Activated CD8-positive, alpha-beta T cell treated with anti-CD3 and anti-CD28 coated beads for 36 hours (primary cell): ENCODE measurements at regions of chr6 and their contacts with region 1.

Region 1: DNA sequence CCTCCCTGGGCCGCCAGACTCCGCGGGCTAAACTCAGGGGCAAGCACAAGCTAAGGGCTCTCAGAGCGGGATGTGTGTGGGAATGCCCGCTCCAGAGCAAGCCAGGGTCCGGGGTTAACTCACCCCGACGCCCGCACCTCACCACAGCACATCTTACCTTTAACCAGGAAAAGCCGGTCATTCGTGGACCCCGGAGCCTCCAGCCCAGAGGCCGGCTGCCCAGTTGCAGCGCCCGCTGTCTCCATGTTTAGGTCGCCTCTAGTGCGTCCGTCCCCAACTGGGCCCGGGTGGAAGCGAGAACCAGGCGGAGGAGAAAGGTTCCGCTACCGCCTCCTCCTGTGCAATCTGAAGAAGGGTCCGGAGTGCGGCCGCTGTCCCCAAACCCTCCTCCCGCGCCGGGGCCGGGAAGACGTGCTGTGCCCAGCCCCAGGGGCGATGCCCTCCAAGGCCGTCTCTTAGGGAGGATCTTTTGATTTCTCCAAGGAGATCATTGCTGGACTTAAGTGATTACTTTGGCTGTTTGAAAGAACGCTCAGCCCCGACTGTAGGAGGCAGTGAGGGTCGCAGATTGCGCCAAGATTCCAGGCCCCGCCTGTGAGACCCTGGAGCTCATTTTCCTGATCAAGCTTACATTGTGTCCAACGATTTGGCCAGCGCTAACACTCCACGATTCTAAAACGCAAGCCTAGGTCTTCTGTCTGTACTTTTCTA is at the start of gene TMEM242:
- DNase-seq: peak; percentile 91
- ATAC-seq: peak; percentile 94
- H3K4me3 Mint-ChIP-seq: peak within 1 kb of the TSS; percentile 91
- H3K27ac Mint-ChIP-seq: peak within 1 kb of the TSS; percentile 88
- H3K4me1 Mint-ChIP-seq: peaks cover 31% of the 10 kb centered on the region
- H3K27me3 Mint-ChIP-seq: peaks cover 21% of the 10 kb centered on the region
- CTCF ChIP-seq: peak; percentile 16
- total RNA-seq, gene TMEM242: 7.8 to 8.0 TPM

Region 2: GRCh38 chr6:157304899-157305663 is 18.3 kb before region 1 on chr6:
- CTCF ChIA-PET with region 1: no interaction called
- POLR2A ChIA-PET with region 1: no interaction called
- intact Hi-C with region 1: no loop called
- DNase-seq: no peak
- ATAC-seq: no peak
- H3K4me3 Mint-ChIP-seq: no peak overlapping the region
- H3K27ac Mint-ChIP-seq: no peak overlapping the region
- H3K4me1 Mint-ChIP-seq: peaks cover 4% of the 10 kb centered on the region
- H3K27me3 Mint-ChIP-seq: no peaks in the 10 kb centered on the region
- CTCF ChIP-seq: no peak

Region 3: DNA sequence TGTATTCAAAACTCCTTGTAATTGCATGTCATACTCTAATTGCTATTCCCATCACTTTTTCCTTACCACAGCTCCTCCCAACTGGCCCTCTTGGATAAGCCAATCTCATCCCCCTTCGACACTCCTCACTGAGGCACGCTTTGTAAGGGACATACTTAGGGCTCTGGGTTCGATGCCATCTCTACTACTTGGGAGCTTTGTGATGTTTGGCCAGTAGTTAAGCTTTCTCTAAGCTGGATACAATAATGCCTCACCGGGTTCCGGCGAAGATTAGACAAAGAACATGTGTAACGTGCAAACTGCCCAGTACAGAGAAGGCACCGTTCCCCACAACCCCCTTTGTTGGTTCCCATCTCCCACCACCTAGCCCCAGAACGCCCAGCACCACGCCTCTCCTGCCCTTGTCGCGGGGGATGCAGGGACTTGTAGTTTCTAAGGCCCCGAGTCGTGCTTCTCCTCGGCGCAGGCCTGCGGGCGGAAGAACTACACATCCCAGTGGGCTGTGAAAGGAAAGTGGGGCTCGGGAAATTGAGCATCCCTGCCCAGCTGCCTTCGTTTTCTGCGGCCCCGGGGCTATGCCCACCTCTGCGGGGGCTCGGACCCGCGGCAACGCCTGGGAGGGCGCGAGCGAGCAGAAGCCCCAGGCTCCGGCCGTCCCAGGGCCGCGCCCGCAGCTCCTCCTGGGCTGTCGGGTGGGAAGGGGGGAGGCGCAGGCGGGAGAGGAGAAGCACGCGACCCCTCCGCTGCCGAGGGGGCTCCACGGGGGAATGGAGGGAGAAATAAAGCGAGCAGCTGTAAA is 56.4 kb after region 1 on chr6:
- CTCF ChIA-PET with region 1: interaction called, 10 read pairs
- POLR2A ChIA-PET with region 1: interaction called, 8 read pairs
- intact Hi-C with region 1: loop called (anchors 5 kb)
- DNase-seq: peak; percentile 94
- ATAC-seq: peak; percentile 84
- H3K4me3 Mint-ChIP-seq: peak overlapping the region; percentile 73
- H3K27ac Mint-ChIP-seq: peak overlapping the region; percentile 21
- H3K4me1 Mint-ChIP-seq: peaks cover 36% of the 10 kb centered on the region
- H3K27me3 Mint-ChIP-seq: peaks cover 7% of the 10 kb centered on the region
- CTCF ChIP-seq: no peak